Psoas muscle (tissue), 8 donors: ENCODE measurements at regions of chr1 and their contacts with region 1.

Region 1: GRCh38 chr1:193131266-193131860 is 9.5 kb downstream of the CDC73 start:
- DNase-seq: no peak
- ATAC-seq: no peak
- H3K4me3 ChIP-seq: no peak overlapping the region
- H3K27ac ChIP-seq: no peak overlapping the region
- H3K4me1 ChIP-seq: no peaks in the 10 kb centered on the region
- H3K27me3 ChIP-seq: no peaks in the 10 kb centered on the region
- CTCF ChIP-seq: no peak

Region 2: GRCh38 chr1:193094112-193094511 is 37.3 kb before region 1 on chr1:
- intact Hi-C with region 1: loop called in 1 of 2 experiments (anchors 5 kb)
- DNase-seq: no peak
- ATAC-seq: no peak
- H3K4me3 ChIP-seq: no peak overlapping the region
- H3K27ac ChIP-seq: no peak overlapping the region
- H3K4me1 ChIP-seq: no peaks in the 10 kb centered on the region
- H3K27me3 ChIP-seq: no peaks in the 10 kb centered on the region
- CTCF ChIP-seq: no peak